MCF 10A (cell line): ENCODE measurements at regions of chr10 and their contacts with region 1.

Region 1: DNA sequence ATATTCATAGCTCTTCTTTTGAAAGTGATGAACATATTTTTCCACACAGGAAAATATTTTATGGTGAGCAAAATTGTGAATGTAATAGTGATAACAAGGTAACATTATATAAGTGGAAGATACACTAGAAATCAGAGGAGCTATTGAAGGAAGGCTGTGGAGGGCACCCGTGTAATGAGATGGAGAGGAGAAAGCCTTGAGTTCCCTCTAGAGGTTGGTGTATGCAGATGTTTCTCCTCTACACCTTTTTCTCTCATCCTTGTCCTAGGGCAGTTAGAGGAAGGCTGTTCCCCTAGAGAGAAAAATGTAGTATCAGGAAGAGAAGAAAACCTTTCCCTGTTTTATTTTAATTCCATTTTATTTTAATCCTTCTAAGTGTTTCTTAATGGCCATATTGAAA is 54.6 kb upstream of the NRG3 start:
- DNase-seq: peak; percentile 38
- H3K4me3 Mint-ChIP-seq: no peak overlapping the region
- H3K27ac Mint-ChIP-seq: no peak overlapping the region
- H3K4me1 Mint-ChIP-seq: no peaks in the 10 kb centered on the region
- H3K27me3 Mint-ChIP-seq: no peaks in the 10 kb centered on the region
- CTCF ChIP-seq: peak; percentile 59

Region 2: DNA sequence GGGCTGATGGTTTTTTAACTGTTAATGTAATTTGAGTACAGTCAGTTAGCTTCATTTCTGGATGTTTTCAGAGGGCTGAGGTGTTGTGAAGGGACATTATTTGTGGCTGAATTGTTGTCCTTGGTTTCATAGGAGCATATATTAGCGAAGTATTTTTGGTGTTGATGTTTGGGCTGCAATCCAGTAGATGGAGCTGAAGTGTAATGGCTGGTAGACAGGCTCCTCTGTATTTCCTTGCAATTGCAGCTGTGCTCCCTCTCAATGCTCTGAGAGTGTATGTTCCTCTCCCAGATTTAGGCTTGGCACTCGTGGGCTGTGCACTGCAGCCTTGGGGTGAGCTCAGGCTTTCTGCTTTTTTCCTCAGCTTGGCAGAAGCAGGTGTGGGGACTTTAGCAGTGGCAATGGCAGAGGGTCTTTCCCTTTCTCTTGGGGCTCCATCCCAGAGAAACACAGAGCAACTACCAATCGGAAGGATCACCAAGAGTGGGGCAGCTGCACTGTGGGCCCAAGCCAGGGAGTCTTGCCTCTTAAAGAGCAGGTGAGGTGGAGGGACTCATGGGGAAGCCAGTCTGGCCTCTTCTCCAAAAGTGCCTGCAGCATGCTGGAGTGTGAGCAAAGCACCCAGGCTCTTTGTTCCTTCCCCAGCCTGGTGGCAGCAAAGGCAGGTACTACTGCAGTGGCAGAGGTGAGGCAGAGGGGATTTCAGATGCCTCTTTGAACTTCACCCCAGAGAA is 738.4 kb before region 1 on chr10:
- CTCF ChIA-PET with region 1: interaction called, 3 read pairs
- POLR2A ChIA-PET with region 1: no interaction called
- intact Hi-C with region 1: loop called (anchors 1 kb)
- DNase-seq: peak; percentile 33
- H3K4me3 Mint-ChIP-seq: no peak overlapping the region
- H3K27ac Mint-ChIP-seq: no peak overlapping the region
- H3K4me1 Mint-ChIP-seq: no peaks in the 10 kb centered on the region
- H3K27me3 Mint-ChIP-seq: peaks cover 47% of the 10 kb centered on the region
- CTCF ChIP-seq: peak; percentile 44

Region 3: GRCh38 chr10:81414038-81414437 is 406.4 kb before region 1 on chr10:
- CTCF ChIA-PET with region 1: interaction called, 10 read pairs
- POLR2A ChIA-PET with region 1: no interaction called
- intact Hi-C with region 1: loop called (anchors 1 kb)
- DNase-seq: peak; percentile 35
- H3K4me3 Mint-ChIP-seq: no peak overlapping the region
- H3K27ac Mint-ChIP-seq: no peak overlapping the region
- H3K4me1 Mint-ChIP-seq: no peaks in the 10 kb centered on the region
- H3K27me3 Mint-ChIP-seq: peaks cover 12% of the 10 kb centered on the region
- CTCF ChIP-seq: peak; percentile 27

Region 4: DNA sequence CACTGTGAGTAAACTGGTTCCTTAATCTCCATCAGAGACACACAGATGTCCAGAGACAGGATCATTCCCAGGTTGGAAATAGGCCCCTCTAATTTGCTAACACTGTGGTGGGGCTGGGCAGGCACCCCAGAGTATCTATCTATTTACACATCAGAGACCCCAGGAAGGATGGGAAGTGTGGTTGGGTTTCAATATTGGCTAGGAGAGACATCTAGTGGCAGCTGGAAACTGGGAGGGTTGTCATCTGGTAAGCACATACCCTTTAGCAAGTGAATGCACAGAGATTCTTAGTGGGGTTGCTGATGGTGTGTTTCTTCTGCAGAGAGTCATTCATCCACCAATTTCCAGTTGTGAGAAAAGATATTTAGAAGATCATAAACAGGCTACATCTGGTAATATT is 18.5 kb after region 1 on chr10:
- CTCF ChIA-PET with region 1: no interaction called
- POLR2A ChIA-PET with region 1: no interaction called
- intact Hi-C with region 1: no loop called
- DNase-seq: peak; percentile 8
- H3K4me3 Mint-ChIP-seq: no peak overlapping the region
- H3K27ac Mint-ChIP-seq: peak overlapping the region; percentile 55
- H3K4me1 Mint-ChIP-seq: peaks cover 6% of the 10 kb centered on the region
- H3K27me3 Mint-ChIP-seq: no peaks in the 10 kb centered on the region
- CTCF ChIP-seq: no peak

Region 5: DNA sequence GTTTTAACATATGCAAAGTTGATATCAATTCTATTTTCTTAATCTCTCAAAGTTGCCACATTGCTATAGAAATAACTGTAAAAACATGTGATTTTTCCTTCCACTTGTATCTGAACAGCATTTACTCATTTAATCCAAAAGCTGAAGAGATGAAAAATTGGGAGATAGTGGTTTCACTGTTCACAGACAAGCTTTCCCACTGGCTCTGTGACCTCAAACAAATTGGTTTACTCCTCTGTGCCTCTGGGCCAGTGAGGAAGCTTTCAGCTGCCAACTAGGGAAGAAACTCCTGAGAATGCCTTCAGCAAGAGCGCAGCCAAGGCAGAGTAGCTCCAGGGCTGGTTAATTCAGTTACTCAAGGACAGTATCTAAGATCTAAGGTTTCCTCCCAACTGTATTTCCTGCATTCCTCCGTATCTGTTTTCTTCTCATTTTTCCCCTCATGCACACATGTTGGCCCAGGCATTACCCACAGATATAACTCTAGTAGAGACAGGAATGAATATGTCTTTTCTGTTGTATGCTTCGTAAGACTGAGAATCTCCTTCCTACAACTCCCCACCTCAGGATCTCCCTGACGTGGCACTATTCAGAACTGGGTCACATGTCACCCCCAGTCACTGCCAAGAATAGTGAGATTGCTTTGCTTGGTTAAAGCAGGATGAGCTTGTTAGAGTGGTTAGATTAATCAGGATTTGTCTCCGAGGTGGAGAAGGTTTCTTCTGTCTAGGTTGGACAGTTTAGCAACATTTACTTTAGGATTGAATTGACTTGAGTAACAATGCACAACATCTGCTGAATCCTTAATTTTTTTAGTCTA is 370.2 kb after region 1 on chr10:
- CTCF ChIA-PET with region 1: no interaction called
- POLR2A ChIA-PET with region 1: no interaction called
- intact Hi-C with region 1: no loop called
- DNase-seq: peak; percentile 29
- H3K4me3 Mint-ChIP-seq: peak overlapping the region; percentile 35
- H3K27ac Mint-ChIP-seq: peak overlapping the region; percentile 10
- H3K4me1 Mint-ChIP-seq: peaks cover 7% of the 10 kb centered on the region
- H3K27me3 Mint-ChIP-seq: no peaks in the 10 kb centered on the region
- CTCF ChIP-seq: no peak